Left lung (tissue), 14 donors: ENCODE measurements at regions of chr12 and their contacts with region 1.

Region 1: GRCh38 chr12:6697584-6698351 is 2.8 kb downstream of the PIANP start:
- DNase-seq: peak in 1 of 4 donors; percentile 56
- ATAC-seq: peak; percentile 57
- H3K4me3 ChIP-seq: no peak overlapping the region
- H3K27ac ChIP-seq: no peak overlapping the region
- H3K4me1 ChIP-seq: peaks cover 6 to 15% of the 10 kb centered on the region in 2 donors
- H3K27me3 ChIP-seq: peaks cover 41 to 88% of the 10 kb centered on the region in 2 donors
- CTCF ChIP-seq: peak in 1 of 2 donors; percentile 14

Region 2: DNA sequence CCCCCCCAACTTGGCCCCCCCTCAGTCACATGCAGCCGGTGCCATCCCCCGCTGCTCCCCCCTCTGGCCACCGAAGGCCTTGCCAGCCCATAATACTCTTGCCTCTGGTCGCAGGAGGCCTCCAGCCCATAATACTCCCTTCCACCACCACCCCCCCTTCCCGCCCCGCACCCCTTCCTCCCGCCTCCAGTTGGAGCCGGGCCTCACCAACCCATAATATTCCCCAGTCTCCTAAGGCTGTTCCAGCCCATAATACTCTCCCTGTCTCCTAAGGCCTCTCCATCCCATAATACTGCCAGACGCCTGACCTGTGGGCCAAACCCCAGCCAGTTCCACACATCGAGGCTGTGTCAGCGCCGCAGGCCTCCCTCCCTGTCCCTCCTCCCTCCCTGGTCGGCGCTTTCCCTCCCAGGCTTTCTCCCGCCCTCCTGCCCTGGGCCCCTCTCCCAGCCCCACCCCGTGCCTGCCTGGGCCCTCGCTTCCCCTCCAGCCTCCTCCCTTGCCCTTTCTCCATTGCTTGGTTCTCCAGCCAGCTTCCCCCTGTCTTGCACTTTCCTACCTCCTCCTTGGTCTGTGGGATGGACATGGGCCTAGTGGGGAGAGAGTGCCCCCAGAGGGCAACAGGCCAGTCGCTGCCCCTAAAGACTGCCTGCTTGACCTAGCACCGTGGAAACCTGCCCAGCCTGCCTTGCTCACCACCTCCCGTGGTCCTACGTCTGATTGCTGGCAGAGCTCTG is 83.8 kb before region 1 on chr12:
- intact Hi-C with region 1: loop called in 1 of 2 experiments (anchors 10 kb)
- DNase-seq: peak; percentile 91 to 99 (median 93)
- ATAC-seq: peak; percentile 78
- H3K4me3 ChIP-seq: no peak overlapping the region
- H3K27ac ChIP-seq: peak overlapping the region; percentile 52 to 83
- H3K4me1 ChIP-seq: peaks cover 9 to 37% of the 10 kb centered on the region in 2 donors
- H3K27me3 ChIP-seq: no peaks in the 10 kb centered on the region
- CTCF ChIP-seq: no peak